ENCODE measurements at regions of chr12 and their contacts with region 1.

Region 1: DNA sequence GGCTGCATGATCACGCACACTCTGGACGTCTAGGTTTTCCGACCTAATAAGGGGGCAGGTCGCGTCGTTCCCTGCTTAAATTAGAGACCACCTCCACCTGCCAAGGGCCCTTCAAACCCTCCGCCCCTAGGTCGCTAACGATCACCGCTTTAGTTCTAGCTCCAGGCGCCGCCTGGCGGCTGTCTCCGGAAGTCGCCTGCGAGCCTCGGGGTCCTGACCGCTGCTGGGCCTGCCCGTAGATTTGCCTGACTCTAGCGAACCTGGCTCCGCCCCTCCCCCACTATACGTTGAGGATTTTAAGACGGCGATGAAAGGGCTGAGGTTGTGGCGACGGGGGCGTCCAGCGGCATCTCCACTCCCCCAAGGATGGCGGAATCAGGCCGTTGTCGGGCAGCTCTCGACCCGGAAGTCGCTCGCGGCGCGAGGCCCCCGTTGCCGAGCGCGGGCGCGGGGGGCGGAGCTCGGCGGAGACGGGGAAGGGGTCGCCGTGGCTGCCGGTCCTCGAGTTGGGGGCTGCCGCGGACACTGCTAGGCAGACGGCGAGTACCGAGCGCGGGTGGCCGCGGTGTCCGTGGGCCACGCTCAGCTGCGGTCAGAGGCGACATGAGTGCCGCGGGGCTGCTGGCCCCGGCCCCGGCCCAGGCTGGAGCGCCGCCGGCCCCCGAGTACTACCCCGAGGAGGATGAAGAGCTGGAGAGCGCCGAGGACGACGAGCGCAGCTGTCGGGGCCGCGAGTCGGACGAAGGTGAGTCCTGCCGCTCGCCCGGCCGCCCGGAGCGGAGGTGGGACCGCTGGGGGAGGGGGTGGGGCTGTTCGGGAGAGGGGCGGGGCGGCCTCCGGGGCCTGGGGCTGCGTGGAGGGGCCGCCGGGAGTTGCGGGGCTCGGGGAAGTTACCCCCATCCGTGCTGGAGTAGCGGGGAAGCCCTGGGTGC is at the start of gene SUDS3:
- DNase-seq: peak; percentile 51
- H3K4me3 ChIP-seq: peak within 1 kb of the TSS; percentile 86
- CTCF ChIP-seq: peak; percentile 94

Region 2: DNA sequence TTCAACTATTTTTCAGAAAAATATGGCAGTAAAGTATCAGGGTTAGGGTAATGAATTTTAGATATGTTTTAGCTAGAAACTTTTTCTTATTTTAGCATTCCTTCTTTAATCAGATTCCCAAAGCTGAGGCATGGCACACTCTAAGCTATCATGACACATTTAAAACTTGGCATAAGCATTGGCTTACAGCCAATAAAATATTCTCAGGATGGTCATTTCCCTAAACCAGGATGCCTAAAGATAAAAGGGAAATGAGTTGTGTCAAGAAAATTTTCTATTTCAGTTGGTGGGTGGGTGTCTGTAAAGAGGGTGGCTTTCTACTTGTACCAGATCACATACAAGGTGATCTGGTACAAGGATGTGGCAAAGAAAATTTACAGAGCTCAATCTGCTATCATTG is 192.7 kb before region 1 on chr12:
- in situ Hi-C with region 1: loop called (anchors 5 kb)
- DNase-seq: no peak
- H3K4me3 ChIP-seq: no peak overlapping the region
- CTCF ChIP-seq: no peak